K562 (cell line): ENCODE measurements at regions of chr12 and their contacts with region 1.

Region 1: GRCh38 chr12:111444925-111445725 is 39.4 kb downstream of the SH2B3 start:
- DNase-seq: no peak
- ATAC-seq: peak; percentile 26
- H3K4me3 ChIP-seq: no peak overlapping the region
- H3K27ac ChIP-seq: peak overlapping the region; percentile 54; the same call in 2 of the 3 replicates
- H3K4me1 ChIP-seq: peaks cover 14 to 33% of the 10 kb centered on the region in 2 experiments
- H3K27me3 ChIP-seq: no peaks in the 10 kb centered on the region
- CTCF ChIP-seq: no peak
- EP300 ChIP-seq: no peak
- POLR2A ChIP-seq: 0 out of 2 replicates have a peak, but pooled peaks have one; percentile 19
- RAD21 ChIP-seq: no peak

Region 2: GRCh38 chr12:110794623-110795280 is 650.4 kb before region 1 on chr12:
- CTCF ChIA-PET with region 1: no interaction called
- POLR2A ChIA-PET with region 1: no interaction called
- in situ Hi-C with region 1: no loop called
- intact Hi-C with region 1: no loop called
- DNase-seq: peak in 2 of 4 experiments; percentile 26 to 44
- ATAC-seq: no peak
- H3K4me3 ChIP-seq: no peak overlapping the region
- H3K27ac ChIP-seq: no peak overlapping the region
- H3K4me1 ChIP-seq: no peaks in the 10 kb centered on the region; a peak in 2 of 5 replicates
- H3K27me3 ChIP-seq: no peaks in the 10 kb centered on the region; a peak in 2 of 5 replicates
- CTCF ChIP-seq: no peak
- EP300 ChIP-seq: no peak
- POLR2A ChIP-seq: no peak
- RAD21 ChIP-seq: no peak

Region 3: GRCh38 chr12:111434680-111435338 is 10.3 kb before region 1 on chr12:
- CTCF ChIA-PET with region 1: no interaction called
- POLR2A ChIA-PET with region 1: interaction called, 16 read pairs
- in situ Hi-C with region 1: no loop called
- intact Hi-C with region 1: no loop called
- DNase-seq: no peak
- ATAC-seq: no peak
- H3K4me3 ChIP-seq: no peak overlapping the region
- H3K27ac ChIP-seq: 0 out of 3 replicates have a peak overlapping the region, but pooled peaks have one; percentile 20
- H3K4me1 ChIP-seq: peaks cover 22 to 49% of the 10 kb centered on the region in 2 experiments
- H3K27me3 ChIP-seq: no peaks in the 10 kb centered on the region
- CTCF ChIP-seq: no peak
- EP300 ChIP-seq: no peak
- POLR2A ChIP-seq: no peak
- RAD21 ChIP-seq: no peak